Left ventricle myocardium inferior (tissue), 1 donor: ENCODE measurements at regions of chr3 and their contacts with region 1.

Region 1: GRCh38 chr3:36868614-36869436 is 76.0 kb downstream of the TRANK1 start:
- DNase-seq: no peak
- H3K4me3 ChIP-seq: no peak overlapping the region
- H3K27ac ChIP-seq: no peak overlapping the region
- H3K4me1 ChIP-seq: no peaks in the 10 kb centered on the region
- H3K27me3 ChIP-seq: no peaks in the 10 kb centered on the region
- CTCF ChIP-seq: peak; percentile 89

Region 2: DNA sequence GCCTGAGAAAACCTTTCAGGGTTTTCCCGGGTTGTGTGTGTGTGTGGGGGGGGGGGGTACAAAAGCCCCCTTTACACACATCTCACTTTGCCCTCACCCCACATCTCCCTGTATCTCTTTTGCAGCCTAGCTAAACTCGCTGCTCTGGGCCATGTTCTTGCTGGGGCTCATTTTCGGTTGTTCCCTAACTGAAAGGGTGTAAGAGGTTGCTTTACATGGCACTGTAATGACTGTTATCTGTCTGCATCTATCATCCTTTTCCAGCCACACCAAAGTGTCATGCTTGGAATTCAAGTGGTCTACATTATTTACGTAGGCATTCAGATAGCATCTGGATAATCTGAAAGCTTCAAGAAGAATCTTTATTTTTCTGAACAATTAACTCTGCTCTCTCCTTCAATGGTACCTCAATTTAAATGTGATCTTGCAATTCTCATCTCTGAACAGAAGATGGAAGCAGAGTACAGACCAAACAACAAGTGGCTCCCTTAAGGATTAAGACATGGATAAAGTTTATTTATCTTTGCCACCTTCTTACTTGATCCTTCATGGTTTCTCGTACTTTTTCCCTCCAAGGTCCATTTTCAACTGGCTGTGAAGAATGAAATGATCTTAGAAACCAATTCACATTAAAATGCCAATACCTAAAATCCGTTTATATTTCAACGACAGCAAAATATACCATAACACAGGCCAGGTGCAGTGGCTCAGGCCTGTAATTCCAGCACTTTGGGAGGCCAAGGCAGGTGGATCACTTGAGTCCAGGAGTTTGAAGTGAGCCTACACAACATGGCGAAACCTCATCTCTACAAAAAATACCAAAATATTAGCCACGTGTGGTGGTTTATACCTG is 139.4 kb before region 1 on chr3:
- intact Hi-C with region 1: loop called (anchors 5 kb)
- DNase-seq: no peak
- H3K4me3 ChIP-seq: no peak overlapping the region
- H3K27ac ChIP-seq: no peak overlapping the region
- H3K4me1 ChIP-seq: peaks cover 10% of the 10 kb centered on the region
- H3K27me3 ChIP-seq: peaks cover 16% of the 10 kb centered on the region
- CTCF ChIP-seq: peak; percentile 88

Region 3: GRCh38 chr3:36969540-36970432 is 101.0 kb after region 1 on chr3:
- intact Hi-C with region 1: no loop called
- DNase-seq: no peak
- H3K4me3 ChIP-seq: no peak overlapping the region
- H3K27ac ChIP-seq: peak overlapping the region; percentile 73
- H3K4me1 ChIP-seq: peaks cover 15% of the 10 kb centered on the region
- H3K27me3 ChIP-seq: no peaks in the 10 kb centered on the region
- CTCF ChIP-seq: no peak